Activated CD8-positive, alpha-beta T cell treated with anti-CD3 and anti-CD28 coated beads for 36 hours (primary cell): ENCODE measurements at regions of chr4 and their contacts with region 1.

Region 1: DNA sequence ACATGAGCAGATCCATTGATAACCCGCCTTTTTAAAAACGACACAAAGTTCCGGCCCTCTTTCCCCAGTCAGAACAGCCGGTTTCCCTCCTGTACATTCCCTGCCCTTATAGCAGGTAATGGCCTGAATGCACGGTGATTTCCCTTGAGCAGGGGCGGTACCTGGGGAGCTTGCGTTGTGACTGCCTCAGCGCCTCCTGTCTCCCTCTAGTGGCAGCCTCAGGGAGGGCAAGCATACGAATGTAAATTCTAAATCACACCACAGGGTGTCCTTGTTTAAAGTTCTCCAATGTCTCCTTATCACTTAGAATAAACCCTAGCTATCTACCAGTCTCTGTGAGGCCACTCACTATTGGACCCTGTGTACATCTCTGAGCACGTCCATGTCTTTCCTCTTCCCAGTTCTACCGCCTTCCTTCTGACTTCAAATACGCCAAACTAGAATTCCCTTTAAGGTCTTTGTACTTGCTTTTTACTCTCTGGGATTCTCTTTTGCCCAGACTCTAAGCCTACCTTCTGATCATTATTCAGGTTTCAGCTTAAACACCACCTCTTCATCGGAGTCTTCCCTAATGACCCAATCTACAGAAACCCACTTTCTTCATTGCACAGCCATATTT is 18.4 kb upstream of the LDB2 start:
- DNase-seq: peak; percentile 90
- ATAC-seq: peak; percentile 98
- H3K4me3 Mint-ChIP-seq: no peak overlapping the region
- H3K27ac Mint-ChIP-seq: no peak overlapping the region
- H3K4me1 Mint-ChIP-seq: peaks cover 3% of the 10 kb centered on the region
- H3K27me3 Mint-ChIP-seq: no peaks in the 10 kb centered on the region
- CTCF ChIP-seq: peak; percentile 97

Region 2: GRCh38 chr4:16794816-16795445 is 121.9 kb before region 1 on chr4:
- CTCF ChIA-PET with region 1: interaction called, 11 read pairs
- POLR2A ChIA-PET with region 1: no interaction called
- intact Hi-C with region 1: loop called (anchors 2 kb)
- DNase-seq: peak; percentile 65
- ATAC-seq: no peak
- H3K4me3 Mint-ChIP-seq: no peak overlapping the region
- H3K27ac Mint-ChIP-seq: no peak overlapping the region
- H3K4me1 Mint-ChIP-seq: no peaks in the 10 kb centered on the region
- H3K27me3 Mint-ChIP-seq: no peaks in the 10 kb centered on the region
- CTCF ChIP-seq: peak; percentile 80

Region 3: GRCh38 chr4:16893141-16893651 is 23.6 kb before region 1 on chr4:
- CTCF ChIA-PET with region 1: interaction called, 10 read pairs
- POLR2A ChIA-PET with region 1: no interaction called
- intact Hi-C with region 1: no loop called
- DNase-seq: peak; percentile 31
- ATAC-seq: no peak
- H3K4me3 Mint-ChIP-seq: peak overlapping the region; percentile 45
- H3K27ac Mint-ChIP-seq: peak overlapping the region; percentile 45
- H3K4me1 Mint-ChIP-seq: peaks cover 50% of the 10 kb centered on the region
- H3K27me3 Mint-ChIP-seq: peaks cover 7% of the 10 kb centered on the region
- CTCF ChIP-seq: no peak

Region 4: DNA sequence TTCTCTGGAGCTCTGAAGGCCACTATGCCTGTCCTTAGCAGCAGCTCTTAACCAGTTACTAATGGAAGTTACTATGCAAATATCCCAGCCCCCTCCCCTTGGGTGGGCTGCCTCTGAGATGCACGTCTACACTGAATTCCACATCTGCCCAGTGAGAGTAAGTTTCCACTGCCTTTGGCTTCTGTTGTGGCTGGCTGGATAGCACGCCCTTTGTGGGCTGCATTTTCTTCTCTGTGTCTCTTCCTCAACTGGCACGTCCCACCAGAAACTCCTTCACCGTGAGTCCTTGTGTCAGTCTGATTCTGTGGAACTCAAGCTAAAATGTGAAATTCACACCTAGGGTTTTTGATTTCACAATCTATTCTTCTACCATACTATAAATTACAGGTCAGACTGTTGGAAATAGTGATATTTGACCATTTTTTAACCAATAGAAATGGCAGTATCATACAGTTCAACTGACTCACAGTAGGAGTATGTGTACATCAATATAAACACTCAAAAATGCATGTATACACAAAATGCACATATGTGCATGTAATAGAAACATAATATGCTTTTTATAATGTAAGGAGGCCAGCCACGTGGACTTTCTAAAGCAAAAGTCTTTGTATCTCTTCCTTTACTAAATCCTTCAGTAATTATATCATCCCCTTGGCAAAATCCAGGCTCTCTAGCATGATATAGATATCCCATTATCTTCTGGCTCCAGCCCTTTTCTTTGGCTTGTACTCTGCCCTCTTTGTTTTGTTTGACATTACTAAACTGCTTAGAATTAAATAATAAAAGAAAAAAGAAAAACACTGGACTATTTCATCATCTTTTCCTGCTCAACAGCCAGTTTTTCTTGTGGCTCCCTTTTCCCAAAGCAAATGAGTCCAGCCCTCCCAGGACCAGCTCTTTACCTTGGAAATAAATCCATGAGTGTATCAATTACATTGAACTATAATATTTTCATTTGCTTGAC is 14.8 kb after region 1 on chr4:
- CTCF ChIA-PET with region 1: interaction called, 14 read pairs
- POLR2A ChIA-PET with region 1: no interaction called
- intact Hi-C with region 1: no loop called
- DNase-seq: no peak
- ATAC-seq: no peak
- H3K4me3 Mint-ChIP-seq: no peak overlapping the region
- H3K27ac Mint-ChIP-seq: no peak overlapping the region
- H3K4me1 Mint-ChIP-seq: no peaks in the 10 kb centered on the region
- H3K27me3 Mint-ChIP-seq: peaks cover 7% of the 10 kb centered on the region
- CTCF ChIP-seq: no peak